Endothelial cell of umbilical vein (primary cell): ENCODE measurements at regions of chr3 and their contacts with region 1.

Region 1: DNA sequence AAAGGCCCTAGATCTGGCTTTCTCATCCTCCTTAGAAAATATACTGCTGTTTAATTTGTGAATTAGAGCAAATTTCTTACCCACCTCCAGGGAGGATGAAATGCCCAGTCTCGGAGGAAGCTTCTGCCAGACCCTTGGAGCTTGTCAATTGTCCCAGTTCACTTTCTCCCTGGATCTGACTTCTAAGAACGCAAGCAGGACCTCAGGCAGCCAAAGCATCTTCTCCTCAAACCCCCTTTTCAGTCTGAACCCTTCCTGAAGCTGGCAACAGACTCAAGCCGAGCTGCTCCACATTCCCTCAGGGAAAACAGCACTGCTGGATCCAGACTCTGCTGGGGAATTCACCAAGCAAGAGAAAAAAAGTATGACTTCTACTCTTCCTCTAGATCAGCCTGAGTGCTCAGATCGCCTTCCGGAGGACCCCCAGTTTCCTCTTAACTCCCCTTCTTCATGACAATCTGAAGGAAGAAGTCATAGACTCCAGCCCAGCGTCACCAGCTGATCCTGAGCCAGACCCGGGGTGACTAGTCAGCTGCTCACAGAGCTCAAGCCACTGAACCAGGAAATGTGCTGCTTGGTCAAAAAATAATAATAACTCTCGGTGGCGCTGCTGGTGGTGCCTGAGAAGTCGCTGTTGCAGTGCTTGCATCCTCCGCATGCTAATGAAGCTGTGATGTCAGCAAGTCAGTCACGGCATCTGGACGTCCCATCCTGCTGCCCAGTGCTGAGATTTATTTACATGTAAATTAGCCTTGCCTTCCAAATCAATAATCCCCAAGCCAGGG is at the start of gene PRICKLE2:
- DNase-seq: peak; percentile 95
- H3K4me3 ChIP-seq: peak within 1 kb of the TSS in 2 of 3 experiments; percentile 45 to 52
- H3K27ac ChIP-seq: peak within 1 kb of the TSS; percentile 72
- H3K4me1 ChIP-seq: peaks cover 28% of the 10 kb centered on the region
- H3K27me3 ChIP-seq: no peaks in the 10 kb centered on the region
- CTCF ChIP-seq: peak in 1 of 2 donors; percentile 18
- POLR2A ChIP-seq: no peak
- total RNA-seq, gene PRICKLE2: 7.1 and 8.9 TPM in 2 replicates

Region 2: DNA sequence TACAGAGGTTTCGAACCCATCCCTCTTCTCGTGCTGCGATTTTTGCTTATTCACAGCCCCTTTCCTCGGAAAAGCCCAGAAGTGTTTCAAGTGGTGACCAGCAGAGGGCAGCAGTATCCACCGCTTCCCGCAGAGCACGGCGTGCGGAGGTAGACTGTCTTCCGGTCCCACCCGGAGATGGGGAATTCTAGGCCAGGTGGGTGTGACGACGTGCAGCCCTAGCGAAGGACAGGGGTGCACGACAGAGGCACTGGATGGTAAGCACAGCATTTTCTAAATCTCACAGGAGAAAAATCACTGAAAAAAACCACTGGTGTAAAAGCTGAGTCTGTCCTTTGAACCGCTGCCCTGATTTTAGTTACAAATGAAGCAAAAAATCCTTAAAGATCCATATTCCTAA is 194.3 kb before region 1 on chr3:
- CTCF ChIA-PET with region 1: interaction called, 45 read pairs
- POLR2A ChIA-PET with region 1: no interaction called
- dilution Hi-C with region 1: no loop called
- intact Hi-C with region 1: loop called (anchors 1 kb)
- DNase-seq: peak; percentile 66
- H3K4me3 ChIP-seq: peak overlapping the region in 1 of 3 experiments; percentile 4
- H3K27ac ChIP-seq: no peak overlapping the region
- H3K4me1 ChIP-seq: no peaks in the 10 kb centered on the region
- H3K27me3 ChIP-seq: peaks cover 19 to 45% of the 10 kb centered on the region in 2 experiments
- CTCF ChIP-seq: peak; percentile 77 to 82
- POLR2A ChIP-seq: no peak

Region 3: DNA sequence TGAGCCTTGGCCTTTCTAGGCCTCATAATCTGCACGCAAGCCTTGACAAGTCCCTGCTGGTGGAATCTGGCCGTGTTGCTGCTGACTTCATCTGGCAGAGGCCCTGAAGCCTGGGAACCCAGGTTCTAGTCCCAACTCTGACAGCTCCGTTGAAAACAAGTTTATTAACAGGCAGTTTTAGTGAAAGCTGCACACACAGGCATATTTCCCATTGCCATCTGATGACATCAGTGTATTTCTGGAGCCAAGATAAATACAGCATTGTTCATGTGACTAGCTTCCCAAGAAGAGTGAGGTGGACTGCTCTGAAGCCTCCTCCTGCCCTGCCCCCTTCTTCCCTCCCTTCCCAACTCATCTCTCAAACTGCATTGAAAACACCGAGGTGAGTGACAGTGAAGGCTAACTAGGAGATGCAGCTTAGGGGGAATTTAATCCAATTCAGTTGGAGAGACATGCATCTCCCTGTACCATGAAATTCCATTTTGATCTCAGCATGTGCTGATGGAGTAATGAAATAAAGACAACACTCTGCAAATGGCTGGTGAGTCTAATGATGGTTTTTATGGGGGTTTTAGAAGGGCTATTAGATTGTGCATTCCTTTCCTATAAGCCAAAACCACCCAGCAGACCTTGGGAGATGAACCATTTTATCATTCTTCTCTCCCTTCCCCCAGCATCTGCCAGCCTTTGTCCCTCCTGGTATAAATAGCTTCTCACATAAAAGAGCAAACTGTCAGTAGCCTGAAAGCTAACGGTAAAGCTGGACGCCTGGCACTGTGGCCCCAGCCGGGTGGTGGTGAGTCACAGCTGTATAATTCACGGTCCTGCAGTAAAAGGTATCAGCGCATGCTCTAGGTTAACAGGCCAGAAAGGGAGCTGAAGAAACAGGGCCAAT is 37.7 kb before region 1 on chr3:
- CTCF ChIA-PET with region 1: interaction called, 37 read pairs
- POLR2A ChIA-PET with region 1: interaction called, 6 read pairs
- dilution Hi-C with region 1: no loop called
- intact Hi-C with region 1: loop called (anchors 1 kb)
- DNase-seq: peak; percentile 100
- H3K4me3 ChIP-seq: peak overlapping the region in 1 of 3 experiments; percentile 4
- H3K27ac ChIP-seq: peak overlapping the region; percentile 84
- H3K4me1 ChIP-seq: peaks cover 40% of the 10 kb centered on the region
- H3K27me3 ChIP-seq: no peaks in the 10 kb centered on the region
- CTCF ChIP-seq: peak in 1 of 2 donors; percentile 15
- POLR2A ChIP-seq: no peak

Region 4: DNA sequence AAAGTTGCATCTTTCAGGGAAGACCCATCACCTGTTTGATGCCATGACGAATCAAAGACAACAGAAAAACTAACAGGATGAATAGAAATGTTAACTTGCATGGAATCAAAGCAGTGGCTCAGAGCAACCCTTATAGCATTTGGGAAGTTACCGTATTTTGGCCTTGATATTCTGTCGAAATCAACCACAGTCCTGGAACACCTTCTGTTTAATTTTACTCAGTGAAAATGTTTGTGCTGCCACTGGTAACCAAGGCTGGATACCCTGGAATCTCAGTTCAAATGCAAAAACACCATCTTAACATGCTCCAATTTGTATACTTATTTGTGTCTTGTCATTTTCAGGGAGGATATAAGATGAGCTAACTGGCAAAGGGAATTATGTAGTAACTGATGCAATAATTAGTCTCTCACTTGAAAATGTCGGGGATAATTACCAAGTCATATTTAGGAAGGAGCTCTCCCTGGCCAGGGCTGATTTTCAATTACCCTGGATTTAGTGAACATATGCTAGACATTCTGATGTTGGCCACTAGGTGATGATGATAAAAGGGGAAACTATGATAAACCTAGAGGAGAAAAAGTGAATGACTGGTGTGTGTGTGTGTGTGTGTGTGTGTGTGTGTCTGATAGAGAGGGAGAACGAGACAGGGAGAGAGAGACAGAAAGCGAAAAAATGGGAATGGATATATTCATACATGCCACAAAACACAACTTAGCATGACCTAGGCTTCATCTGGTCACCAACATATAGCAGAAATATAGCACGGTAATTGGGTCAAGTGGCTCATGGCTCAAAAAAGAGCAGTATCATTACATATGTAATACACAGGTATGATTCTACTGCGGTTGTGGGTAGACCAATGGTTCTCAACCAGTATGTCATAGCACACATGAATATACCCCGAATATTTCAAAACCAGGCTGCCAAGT is 19.3 kb after region 1 on chr3:
- CTCF ChIA-PET with region 1: interaction called, 11 read pairs
- POLR2A ChIA-PET with region 1: no interaction called
- dilution Hi-C with region 1: no loop called
- intact Hi-C with region 1: no loop called
- DNase-seq: peak; percentile 41
- H3K4me3 ChIP-seq: no peak overlapping the region
- H3K27ac ChIP-seq: no peak overlapping the region
- H3K4me1 ChIP-seq: no peaks in the 10 kb centered on the region
- H3K27me3 ChIP-seq: peaks cover 0 to 4% of the 10 kb centered on the region in 2 experiments
- CTCF ChIP-seq: peak; percentile 42 to 51
- POLR2A ChIP-seq: no peak

Region 5: GRCh38 chr3:64399205-64399800 is 174.3 kb after region 1 on chr3:
- CTCF ChIA-PET with region 1: interaction called, 8 read pairs
- POLR2A ChIA-PET with region 1: no interaction called
- dilution Hi-C with region 1: no loop called
- intact Hi-C with region 1: loop called (anchors 1 kb)
- DNase-seq: peak; percentile 77
- H3K4me3 ChIP-seq: no peak overlapping the region
- H3K27ac ChIP-seq: no peak overlapping the region
- H3K4me1 ChIP-seq: no peaks in the 10 kb centered on the region
- H3K27me3 ChIP-seq: peaks cover 0 to 6% of the 10 kb centered on the region in 2 experiments
- CTCF ChIP-seq: peak; percentile 61 to 63
- POLR2A ChIP-seq: no peak